SK-N-SH (cell line): ENCODE measurements at regions of chr18 and their contacts with region 1.

Region 1: DNA sequence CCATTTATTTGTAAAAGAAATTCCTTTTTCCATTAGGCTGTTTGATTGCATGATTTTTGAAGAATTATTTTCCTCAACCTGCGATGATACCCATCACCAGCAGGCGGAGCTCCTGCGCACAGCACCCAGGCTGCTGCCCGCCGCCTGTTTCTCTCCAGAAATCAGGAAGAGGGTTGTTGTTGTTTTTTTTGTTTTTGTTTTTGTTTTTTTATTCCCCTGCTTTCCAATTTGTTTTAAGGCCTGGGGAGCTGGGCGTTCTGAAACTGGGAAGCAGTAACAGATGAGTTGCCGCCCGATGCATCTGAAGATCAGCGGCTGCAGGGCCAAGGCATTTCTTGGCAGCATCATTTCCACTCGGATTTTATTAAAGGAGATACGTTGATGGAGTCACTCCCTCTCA is 132.1 kb downstream of the MBP start:
- DNase-seq: peak; percentile 82
- H3K4me3 ChIP-seq: no peak overlapping the region; a peak in 1 of 4 replicates
- H3K27ac ChIP-seq: no peak overlapping the region
- H3K4me1 ChIP-seq: no peaks in the 10 kb centered on the region
- H3K27me3 ChIP-seq: peaks cover 4% of the 10 kb centered on the region; the same call in 1 of the 2 replicates
- CTCF ChIP-seq: peak; percentile 99
- EP300 ChIP-seq: no peak
- RAD21 ChIP-seq: peak; percentile 85

Region 2: GRCh38 chr18:76982841-76983587 is 17.5 kb before region 1 on chr18:
- CTCF ChIA-PET with region 1: interaction called, 87 read pairs
- POLR2A ChIA-PET with region 1: no interaction called
- DNase-seq: peak; percentile 90
- H3K4me3 ChIP-seq: peak overlapping the region in 1 of 2 experiments; percentile 45; a peak in 2 of 4 replicates
- H3K27ac ChIP-seq: no peak overlapping the region
- H3K4me1 ChIP-seq: peaks cover 0 to 11% of the 10 kb centered on the region in 2 experiments; a peak in 1 of 4 replicates
- H3K27me3 ChIP-seq: no peaks in the 10 kb centered on the region
- CTCF ChIP-seq: peak; percentile 93
- EP300 ChIP-seq: no peak
- RAD21 ChIP-seq: peak; percentile 76

Region 3: GRCh38 chr18:77013811-77014521 is 13.4 kb after region 1 on chr18:
- CTCF ChIA-PET with region 1: interaction called, 41 read pairs
- POLR2A ChIA-PET with region 1: no interaction called
- DNase-seq: no peak
- H3K4me3 ChIP-seq: no peak overlapping the region
- H3K27ac ChIP-seq: no peak overlapping the region
- H3K4me1 ChIP-seq: no peaks in the 10 kb centered on the region
- H3K27me3 ChIP-seq: no peaks in the 10 kb centered on the region
- CTCF ChIP-seq: no peak
- EP300 ChIP-seq: no peak
- RAD21 ChIP-seq: no peak

Region 4: DNA sequence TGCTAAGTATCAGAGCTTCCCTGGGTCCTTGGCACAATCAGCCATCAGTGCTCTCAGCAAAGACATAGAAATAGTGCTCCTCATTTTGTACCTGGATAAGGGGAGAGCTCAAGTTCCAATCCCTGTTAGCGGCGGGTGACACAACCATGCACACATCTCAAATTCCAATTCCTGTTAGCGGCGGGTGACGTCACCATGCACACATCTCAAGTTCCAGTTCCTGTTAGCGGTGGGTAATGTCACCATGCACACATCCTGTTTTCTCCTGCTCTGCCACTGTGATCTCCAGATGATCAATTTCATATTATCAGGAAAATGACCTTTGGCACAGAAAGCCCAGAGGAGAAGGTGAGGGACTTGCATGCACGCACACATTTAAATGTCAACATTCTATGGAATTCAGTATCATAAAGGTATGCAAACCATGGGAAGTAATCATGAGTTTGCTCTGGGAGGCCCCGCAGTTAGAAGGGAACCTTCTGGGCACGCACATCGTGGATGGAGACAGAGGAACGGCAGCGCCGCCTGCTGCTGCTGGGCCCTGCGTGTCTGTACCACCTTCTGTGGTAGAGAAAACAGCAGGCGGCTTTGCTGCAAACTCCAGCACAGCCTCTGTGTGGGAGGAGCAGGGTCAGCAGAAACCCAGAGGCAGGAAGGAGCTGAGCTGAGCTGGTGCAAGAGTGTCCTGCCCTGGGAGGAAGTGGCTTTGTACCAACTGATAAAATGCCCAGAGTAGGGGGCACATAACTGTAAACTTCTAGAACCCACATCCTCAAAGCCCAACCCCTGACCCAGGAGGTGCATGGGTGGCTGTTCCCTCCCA is 54.3 kb after region 1 on chr18:
- CTCF ChIA-PET with region 1: interaction called, 28 read pairs
- POLR2A ChIA-PET with region 1: no interaction called
- DNase-seq: peak; percentile 69
- H3K4me3 ChIP-seq: no peak overlapping the region
- H3K27ac ChIP-seq: no peak overlapping the region; a peak in 1 of 4 replicates
- H3K4me1 ChIP-seq: peaks cover 5 to 9% of the 10 kb centered on the region in 2 experiments; a peak in 2 of 4 replicates
- H3K27me3 ChIP-seq: no peaks in the 10 kb centered on the region
- CTCF ChIP-seq: peak; percentile 56
- EP300 ChIP-seq: no peak
- RAD21 ChIP-seq: peak; percentile 62

Region 5: DNA sequence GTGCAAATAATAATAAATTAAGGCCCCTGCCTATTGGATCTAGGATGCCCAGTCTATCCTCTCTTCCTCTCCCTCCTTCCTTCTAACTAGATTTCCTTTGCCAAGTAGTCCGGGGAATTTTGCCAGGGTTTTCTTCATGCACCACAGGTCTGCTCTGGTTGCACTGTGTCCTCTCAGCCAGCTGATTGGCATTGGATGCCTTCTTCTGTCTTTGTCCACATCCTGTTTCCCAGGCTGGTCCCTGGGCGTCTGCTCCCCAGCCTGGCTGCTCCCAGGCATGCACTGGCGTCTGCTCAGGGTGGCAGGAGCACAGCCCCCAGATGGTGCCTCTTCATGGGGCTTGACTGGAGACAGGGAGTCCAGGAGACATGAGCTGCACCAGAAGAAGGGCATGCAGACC is 315.5 kb after region 1 on chr18:
- CTCF ChIA-PET with region 1: no interaction called
- POLR2A ChIA-PET with region 1: no interaction called
- DNase-seq: no peak
- H3K4me3 ChIP-seq: no peak overlapping the region
- H3K27ac ChIP-seq: no peak overlapping the region
- H3K4me1 ChIP-seq: no peaks in the 10 kb centered on the region
- H3K27me3 ChIP-seq: no peaks in the 10 kb centered on the region
- CTCF ChIP-seq: no peak
- EP300 ChIP-seq: no peak
- RAD21 ChIP-seq: no peak

Region 6: GRCh38 chr18:77650799-77651385 is 650.4 kb after region 1 on chr18:
- CTCF ChIA-PET with region 1: interaction called, 11 read pairs
- POLR2A ChIA-PET with region 1: no interaction called
- DNase-seq: peak; percentile 85
- H3K4me3 ChIP-seq: no peak overlapping the region; a peak in 1 of 4 replicates
- H3K27ac ChIP-seq: no peak overlapping the region
- H3K4me1 ChIP-seq: no peaks in the 10 kb centered on the region
- H3K27me3 ChIP-seq: no peaks in the 10 kb centered on the region
- CTCF ChIP-seq: peak; percentile 46
- EP300 ChIP-seq: no peak
- RAD21 ChIP-seq: peak; percentile 61